Dorsolateral prefrontal cortex (tissue), 120 donors: ENCODE measurements at regions of chr2 and their contacts with region 1.

Region 1: GRCh38 chr2:193695367-193695766 is 1500.6 kb upstream of the TMEFF2 start:
- DNase-seq: no peak
- H3K4me3 ChIP-seq: no peak overlapping the region
- H3K27ac ChIP-seq: no peak overlapping the region
- H3K27me3 ChIP-seq: peaks cover 0 to 4% (median 0%) of the 10 kb centered on the region in 45 donors
- CTCF ChIP-seq: peak in 25 of 56 donors; percentile 4 to 51 (median 26)

Region 2: DNA sequence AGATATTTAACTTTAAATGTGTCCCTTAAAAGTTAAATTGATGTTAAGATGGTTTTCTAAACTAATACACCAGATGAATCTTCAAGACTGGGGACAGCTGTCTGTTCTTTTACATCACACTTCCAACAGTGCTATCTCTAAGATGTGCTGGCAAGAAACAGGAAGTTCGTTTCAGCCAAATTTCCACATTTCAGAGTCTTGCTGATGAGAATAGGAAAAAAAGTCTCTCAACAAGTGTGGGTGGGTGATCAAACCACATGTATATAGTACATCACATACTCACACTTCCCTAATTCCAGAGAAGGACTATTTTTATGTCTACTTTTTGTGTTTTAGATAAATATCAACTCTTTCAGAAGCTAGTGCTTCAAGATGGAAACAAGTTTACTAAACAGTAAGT is 212.2 kb after region 1 on chr2:
- intact Hi-C with region 1: no loop called
- DNase-seq: peak in 1 of 10 donors; percentile 11
- H3K4me3 ChIP-seq: no peak overlapping the region
- H3K27ac ChIP-seq: no peak overlapping the region
- H3K27me3 ChIP-seq: no peaks in the 10 kb centered on the region
- CTCF ChIP-seq: no peak

Region 3: GRCh38 chr2:193963472-193964119 is 268.2 kb after region 1 on chr2:
- intact Hi-C with region 1: loop called in 1 of 2 experiments (anchors 10 kb)
- DNase-seq: peak in 2 of 10 donors; percentile 3 to 29
- H3K4me3 ChIP-seq: no peak overlapping the region
- H3K27ac ChIP-seq: no peak overlapping the region
- H3K27me3 ChIP-seq: no peaks in the 10 kb centered on the region
- CTCF ChIP-seq: peak in 54 of 56 donors; percentile 31 to 69 (median 54)

Region 4: GRCh38 chr2:194155431-194155830 is 460.1 kb after region 1 on chr2:
- intact Hi-C with region 1: no loop called
- DNase-seq: peak in 1 of 10 donors; percentile 5
- H3K4me3 ChIP-seq: no peak overlapping the region
- H3K27ac ChIP-seq: no peak overlapping the region
- H3K27me3 ChIP-seq: no peaks in the 10 kb centered on the region
- CTCF ChIP-seq: no peak